Activated CD4-positive, alpha-beta T cell treated with anti-CD3 and anti-CD28 coated beads, Interleukin-2, amount 10 ng/mL, durations not matched to agents 24 days and 14 days (primary cell): ENCODE measurements at regions of chr12 and their contacts with region 1.

Region 1: DNA sequence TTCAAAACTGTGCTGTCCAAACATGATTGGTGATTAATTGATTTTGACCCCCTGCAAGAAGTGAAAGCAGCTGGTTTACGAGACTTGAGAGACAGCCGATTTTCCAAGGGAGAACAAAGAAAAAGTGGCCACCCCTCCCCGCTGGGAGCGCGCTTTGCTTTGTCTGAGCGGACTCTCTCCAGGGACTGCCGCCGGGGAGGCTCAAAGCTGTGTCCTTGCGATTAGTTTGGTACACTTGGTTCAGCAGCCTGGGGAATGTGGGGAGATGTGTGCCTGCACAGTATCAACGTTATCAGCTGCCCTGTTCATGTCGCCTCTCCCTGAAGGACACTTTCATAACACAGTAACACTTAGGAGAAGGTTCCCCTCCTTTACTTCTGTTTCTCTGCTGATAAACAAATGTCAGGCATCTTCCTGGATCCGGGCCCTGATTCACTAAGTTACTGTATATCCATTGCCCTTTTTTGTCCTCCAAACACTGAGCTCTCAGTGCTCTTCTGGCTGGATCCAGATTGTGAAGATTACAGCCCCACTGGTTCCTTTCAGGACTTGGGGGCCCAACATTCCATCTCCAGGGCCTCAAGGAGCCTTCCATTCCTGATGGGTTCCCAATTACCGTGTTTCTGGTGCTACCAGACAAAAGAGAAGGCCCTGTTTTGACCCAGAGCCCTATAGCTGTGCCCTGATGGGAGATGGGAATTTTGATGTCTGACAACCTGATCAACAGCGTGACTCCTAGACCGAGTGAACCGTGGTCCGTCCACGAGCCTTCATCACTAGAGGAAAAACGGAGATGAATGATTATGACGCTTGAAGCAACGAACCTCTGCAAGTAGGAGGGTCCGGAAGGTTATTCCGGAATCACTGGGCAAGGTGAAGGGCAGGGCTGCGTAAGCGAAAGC is 31.7 kb upstream of the TUBA1C start:
- DNase-seq: no peak
- H3K4me3 Mint-ChIP-seq: peak overlapping the region; percentile 88
- H3K27ac Mint-ChIP-seq: peak overlapping the region; percentile 77
- H3K4me1 Mint-ChIP-seq: peaks cover 14% of the 10 kb centered on the region
- H3K27me3 Mint-ChIP-seq: peaks cover 1% of the 10 kb centered on the region

Region 2: DNA sequence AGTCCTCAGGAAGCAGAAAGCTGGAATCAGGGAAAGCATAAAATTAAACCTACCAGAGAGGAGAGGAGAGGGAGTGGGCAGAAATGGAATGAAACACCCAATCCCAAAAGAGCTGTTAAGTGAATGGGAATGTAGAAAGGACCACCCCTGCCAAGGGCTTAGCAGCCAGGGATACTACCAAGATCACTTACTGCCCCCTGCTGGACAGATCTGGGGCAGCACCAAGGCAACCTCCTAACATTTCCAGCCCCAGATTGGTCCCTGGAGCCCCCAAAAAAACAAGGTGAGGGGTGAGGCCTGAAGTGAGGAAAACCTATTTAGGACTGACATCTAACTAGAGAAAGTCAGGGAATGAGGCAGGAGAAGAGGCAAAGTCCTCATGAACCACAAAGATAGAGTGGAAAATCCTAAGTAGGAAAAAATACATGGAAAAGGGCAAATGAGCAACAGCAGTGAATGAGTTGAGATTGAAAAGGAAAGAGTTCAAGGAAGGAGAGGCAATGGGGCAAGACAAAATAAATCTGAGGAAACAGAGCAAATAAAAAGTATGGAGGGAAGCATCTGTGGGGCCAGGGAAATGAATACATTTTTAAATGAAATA is 296.7 kb before region 1 on chr12:
- intact Hi-C with region 1: no loop called
- DNase-seq: peak; percentile 94
- H3K4me3 Mint-ChIP-seq: no peak overlapping the region
- H3K27ac Mint-ChIP-seq: peak overlapping the region; percentile 39
- H3K4me1 Mint-ChIP-seq: peaks cover 24% of the 10 kb centered on the region
- H3K27me3 Mint-ChIP-seq: no peaks in the 10 kb centered on the region

Region 3: GRCh38 chr12:49110464-49111155 is 122.6 kb before region 1 on chr12 and contains the start of gene LMBR1L:
- intact Hi-C with region 1: loop called (anchors 1 kb)
- DNase-seq: peak; percentile 99
- H3K4me3 Mint-ChIP-seq: peak within 1 kb of the TSS; percentile 97
- H3K27ac Mint-ChIP-seq: peak within 1 kb of the TSS; percentile 94
- H3K4me1 Mint-ChIP-seq: peaks cover 24% of the 10 kb centered on the region
- H3K27me3 Mint-ChIP-seq: no peaks in the 10 kb centered on the region
- total RNA-seq, gene LMBR1L: 39.9 and 43.7 TPM in 2 replicates

Region 4: DNA sequence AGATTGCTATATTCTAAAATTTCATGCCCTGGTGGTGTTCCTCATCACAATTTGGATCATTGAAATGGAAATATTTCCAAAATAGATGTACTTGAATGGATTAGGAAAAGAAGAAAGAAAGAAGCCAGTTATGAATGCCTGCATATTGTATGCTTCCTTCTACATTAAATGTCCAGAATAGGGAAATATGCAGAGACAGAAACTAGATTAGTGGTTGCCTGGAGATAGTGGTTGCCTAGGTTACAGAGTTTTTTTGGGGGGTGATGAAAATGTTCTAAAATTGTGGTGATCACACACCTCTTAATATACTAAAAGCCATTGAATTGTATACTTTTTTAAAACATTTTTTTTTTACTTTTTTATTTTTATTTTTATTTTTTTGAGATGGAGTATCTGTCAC is 62.3 kb before region 1 on chr12:
- intact Hi-C with region 1: no loop called
- DNase-seq: no peak
- H3K4me3 Mint-ChIP-seq: no peak overlapping the region
- H3K27ac Mint-ChIP-seq: no peak overlapping the region
- H3K4me1 Mint-ChIP-seq: no peaks in the 10 kb centered on the region
- H3K27me3 Mint-ChIP-seq: peaks cover 11% of the 10 kb centered on the region

Region 5: DNA sequence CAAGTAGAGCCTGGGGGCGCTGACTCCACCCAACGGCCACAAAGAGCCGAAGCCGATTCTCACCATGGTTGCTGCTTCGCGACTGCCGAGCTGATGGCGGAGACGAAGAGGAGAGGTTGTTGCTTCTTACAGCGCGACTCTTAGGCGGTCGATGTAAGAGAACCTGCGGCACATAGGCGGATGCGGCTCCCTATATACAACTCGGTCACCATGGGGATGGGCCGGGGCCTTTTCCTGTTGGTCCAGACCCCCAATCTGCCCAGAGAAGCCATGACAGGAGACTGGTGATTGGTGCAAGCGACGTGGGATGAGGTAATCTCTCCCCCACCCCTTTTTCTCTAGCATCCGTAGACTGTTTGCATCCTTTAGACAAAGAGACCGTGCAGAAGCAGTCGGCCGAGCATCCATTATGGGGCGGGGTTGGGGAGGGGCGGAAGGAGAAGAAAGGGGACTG is 44.2 kb before region 1 on chr12 and contains the start of gene TUBA1A:
- intact Hi-C with region 1: loop called (anchors 1 kb)
- DNase-seq: peak; percentile 98
- H3K4me3 Mint-ChIP-seq: peak within 1 kb of the TSS; percentile 93
- H3K27ac Mint-ChIP-seq: peak within 1 kb of the TSS; percentile 99
- H3K4me1 Mint-ChIP-seq: peaks cover 11% of the 10 kb centered on the region
- H3K27me3 Mint-ChIP-seq: peaks cover 9% of the 10 kb centered on the region
- total RNA-seq, gene TUBA1A: 45.9 and 46.8 TPM in 2 replicates

Region 6: GRCh38 chr12:49219417-49220026 is 13.7 kb before region 1 on chr12:
- intact Hi-C with region 1: no loop called
- DNase-seq: no peak
- H3K4me3 Mint-ChIP-seq: no peak overlapping the region
- H3K27ac Mint-ChIP-seq: no peak overlapping the region
- H3K4me1 Mint-ChIP-seq: peaks cover 3% of the 10 kb centered on the region
- H3K27me3 Mint-ChIP-seq: peaks cover 14% of the 10 kb centered on the region